PC-9 (cell line): ENCODE measurements at regions of chr1 and their contacts with region 1.

Region 1: DNA sequence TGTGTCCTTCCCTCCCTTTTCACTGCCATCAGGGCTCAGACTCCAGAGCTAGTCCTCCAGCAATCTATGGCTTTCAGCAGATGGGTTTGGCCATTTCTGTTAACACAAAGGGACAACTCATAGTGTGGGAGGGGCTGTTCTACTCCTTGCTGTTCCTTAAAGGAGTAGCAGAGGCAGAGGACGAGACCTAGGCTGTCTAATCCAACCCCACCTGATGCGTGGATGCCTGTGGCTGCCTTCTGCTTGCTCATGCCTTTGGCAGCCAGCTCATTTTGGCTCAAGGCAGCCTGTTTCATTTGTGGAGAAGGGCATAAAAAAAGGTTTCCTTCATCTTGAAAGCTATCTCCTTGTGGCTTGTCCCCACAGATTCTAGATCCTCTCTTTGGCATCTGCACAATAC is 27.0 kb downstream of the MFSD2A start:
- DNase-seq: peak; percentile 90 to 93
- H3K4me3 ChIP-seq: no peak overlapping the region
- H3K27ac ChIP-seq: peak overlapping the region; percentile 65
- H3K4me1 ChIP-seq: peaks cover 36% of the 10 kb centered on the region
- H3K27me3 ChIP-seq: no peaks in the 10 kb centered on the region
- CTCF ChIP-seq: no peak

Region 2: DNA sequence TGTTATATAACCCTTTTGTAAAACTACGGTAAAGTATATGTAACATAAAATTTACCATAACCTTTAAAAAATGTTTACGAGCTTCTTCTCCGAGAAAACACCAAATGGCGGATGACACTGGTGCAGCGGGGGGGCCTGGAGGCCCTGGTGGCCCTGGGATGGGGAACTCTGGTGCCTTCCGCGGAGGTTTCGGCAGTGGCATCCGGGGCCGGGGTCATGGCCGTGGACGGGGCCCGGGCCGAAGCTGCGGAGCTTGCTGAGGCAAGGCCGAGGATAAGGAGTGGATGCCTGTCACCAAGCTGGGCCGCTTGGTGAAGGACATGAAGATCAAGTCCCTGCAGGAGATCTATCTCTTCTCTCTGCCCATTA is 19.5 kb before region 1 on chr1:
- CTCF ChIA-PET with region 1: no interaction called
- POLR2A ChIA-PET with region 1: no interaction called
- intact Hi-C with region 1: no loop called
- DNase-seq: no peak
- H3K4me3 ChIP-seq: no peak overlapping the region
- H3K27ac ChIP-seq: no peak overlapping the region
- H3K4me1 ChIP-seq: no peaks in the 10 kb centered on the region
- H3K27me3 ChIP-seq: no peaks in the 10 kb centered on the region
- CTCF ChIP-seq: no peak

Region 3: DNA sequence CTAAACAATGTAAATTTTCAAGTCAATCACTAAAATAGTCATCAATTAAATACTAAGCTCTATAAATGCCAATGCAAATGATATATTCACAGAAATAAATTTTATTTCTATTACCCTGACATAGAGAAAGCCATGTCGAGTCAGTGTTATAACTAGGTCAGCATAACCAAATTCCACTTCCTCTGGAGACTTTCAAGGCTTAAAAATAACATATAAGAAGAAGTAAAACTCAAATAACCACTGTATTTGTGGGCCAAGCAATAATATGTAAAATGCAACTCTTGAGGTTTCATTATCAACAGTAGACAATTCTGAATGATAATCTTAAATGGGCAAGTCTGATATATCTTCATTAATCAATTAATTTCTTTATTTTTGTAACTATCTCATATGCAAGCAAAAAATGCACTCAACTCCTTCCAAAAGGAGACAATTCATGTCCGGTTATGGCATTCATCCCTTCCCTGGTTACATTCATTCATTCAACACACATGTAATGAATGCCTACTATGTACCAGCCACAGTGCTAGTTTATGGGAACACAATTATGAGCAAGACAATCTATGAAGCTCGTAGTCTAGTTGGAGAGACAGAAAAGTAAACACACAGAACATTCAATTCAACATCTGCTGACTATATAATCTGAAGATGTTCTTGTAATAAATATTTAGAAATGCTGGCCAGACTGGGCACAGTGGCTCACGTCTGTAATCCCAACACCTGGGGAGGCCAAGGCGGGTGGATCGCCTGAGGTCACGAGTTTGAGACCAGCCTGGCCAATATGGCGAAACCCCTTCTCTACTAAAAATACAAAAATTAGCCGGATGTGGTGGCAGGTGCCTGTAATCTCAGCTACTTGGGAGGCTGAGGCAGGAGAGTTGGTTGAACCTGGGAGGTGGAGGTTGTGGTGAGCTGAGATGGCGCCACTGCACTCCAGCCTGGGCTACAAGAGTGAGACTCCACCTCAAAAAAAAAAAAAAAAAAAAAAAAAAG is 21.5 kb after region 1 on chr1:
- CTCF ChIA-PET with region 1: no interaction called
- POLR2A ChIA-PET with region 1: no interaction called
- intact Hi-C with region 1: no loop called
- DNase-seq: no peak
- H3K4me3 ChIP-seq: no peak overlapping the region
- H3K27ac ChIP-seq: no peak overlapping the region
- H3K4me1 ChIP-seq: no peaks in the 10 kb centered on the region
- H3K27me3 ChIP-seq: no peaks in the 10 kb centered on the region
- CTCF ChIP-seq: no peak

Region 4: DNA sequence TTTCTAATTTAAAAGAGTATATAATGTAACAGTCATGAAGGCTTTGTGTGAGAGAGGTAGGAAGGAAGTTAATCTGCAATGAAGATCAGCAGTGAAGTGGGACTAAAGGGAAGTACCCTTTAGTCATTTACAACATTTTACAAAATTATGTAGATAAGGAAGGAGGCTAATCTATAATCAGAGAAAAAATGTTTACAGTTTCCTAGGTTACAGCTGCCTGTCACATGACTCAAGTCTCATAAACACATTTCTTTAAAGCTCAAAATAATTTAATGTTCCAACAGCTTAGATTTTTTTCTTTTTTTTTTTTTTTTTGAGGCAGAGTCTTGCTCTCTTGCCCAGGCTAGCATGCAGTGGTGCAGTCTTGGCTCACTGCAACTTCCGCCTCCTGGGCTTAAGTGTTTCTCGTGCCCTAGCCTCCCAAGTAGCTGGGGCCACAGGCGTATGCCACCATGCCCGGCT is 32.3 kb after region 1 on chr1:
- CTCF ChIA-PET with region 1: interaction called, 3 read pairs
- POLR2A ChIA-PET with region 1: interaction called, 13 read pairs
- intact Hi-C with region 1: no loop called
- DNase-seq: peak in 1 of 2 experiments; percentile 74
- H3K4me3 ChIP-seq: no peak overlapping the region
- H3K27ac ChIP-seq: peak overlapping the region; percentile 58; the same call in 1 of the 2 replicates
- H3K4me1 ChIP-seq: peaks cover 21% of the 10 kb centered on the region
- H3K27me3 ChIP-seq: no peaks in the 10 kb centered on the region
- CTCF ChIP-seq: no peak